ENCODE measurements at regions of chr5 and their contacts with region 1.

Region 1: DNA sequence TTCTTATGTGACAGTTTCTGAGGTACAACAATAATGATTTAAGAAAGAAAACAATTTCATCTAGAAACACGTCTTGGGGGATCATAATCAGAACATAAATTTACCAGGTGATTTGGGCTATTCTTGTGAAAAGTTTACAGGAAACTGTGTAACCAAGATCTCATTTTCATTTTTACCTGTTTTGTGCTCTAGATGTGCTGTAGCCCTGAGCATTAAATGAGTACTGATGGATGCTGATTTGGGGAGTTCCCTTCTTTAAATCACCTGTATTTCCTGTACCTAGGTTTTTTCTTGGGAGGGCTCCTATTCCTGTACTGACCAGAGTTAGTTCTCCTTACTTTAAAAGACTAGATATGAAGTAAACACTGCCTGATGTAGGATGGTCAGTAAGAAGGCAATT is 12.7 kb downstream of the MATR3 start:
- DNase-seq: no peak
- H3K4me3 ChIP-seq: no peak overlapping the region
- H3K27ac ChIP-seq: peak overlapping the region in 1 of 2 experiments; percentile 16
- H3K4me1 ChIP-seq: peaks cover 6 to 31% (median 15%) of the 10 kb centered on the region in 4 experiments
- H3K27me3 ChIP-seq: no peaks in the 10 kb centered on the region

Region 2: GRCh38 chr5:139293504-139294373 is 12.5 kb before region 1 on chr5 and contains the start of gene MATR3:
- CTCF ChIA-PET with region 1: interaction called, 14 read pairs
- POLR2A ChIA-PET with region 1: interaction called, 6 read pairs
- DNase-seq: peak; percentile 93 to 95 (median 95)
- H3K4me3 ChIP-seq: peak within 1 kb of the TSS; percentile 81 to 100 (median 90)
- H3K27ac ChIP-seq: peak within 1 kb of the TSS; percentile 99
- H3K4me1 ChIP-seq: peaks cover 11 to 38% (median 22%) of the 10 kb centered on the region in 4 experiments
- H3K27me3 ChIP-seq: no peaks in the 10 kb centered on the region

Measured in common myeloid progenitor, CD34-positive (primary cell).